Thyroid gland (tissue), 4 donors: ENCODE measurements at regions of chr6 and their contacts with region 1.

Region 1: DNA sequence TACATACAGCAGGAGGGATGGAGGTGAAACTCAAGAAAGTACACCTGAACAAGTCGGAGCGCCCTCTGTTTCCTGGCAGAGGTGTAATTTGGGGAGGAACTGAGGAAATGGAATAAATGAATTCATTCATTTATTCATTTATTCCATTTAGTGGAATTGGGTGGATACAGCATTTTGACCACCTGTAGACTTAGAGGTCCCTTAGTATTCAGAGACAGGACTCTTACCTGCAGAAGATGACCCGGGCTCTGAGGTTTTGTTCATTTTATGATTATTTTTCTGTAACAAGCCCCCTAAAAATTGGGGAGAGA is 9.1 kb downstream of the TRIM31 start:
- DNase-seq: no peak
- H3K4me3 ChIP-seq: no peak overlapping the region
- H3K27ac ChIP-seq: no peak overlapping the region
- H3K4me1 ChIP-seq: peaks cover 14 to 29% of the 10 kb centered on the region in 2 donors
- H3K27me3 ChIP-seq: no peaks in the 10 kb centered on the region
- CTCF ChIP-seq: no peak
- POLR2A ChIP-seq: no peak

Region 2: DNA sequence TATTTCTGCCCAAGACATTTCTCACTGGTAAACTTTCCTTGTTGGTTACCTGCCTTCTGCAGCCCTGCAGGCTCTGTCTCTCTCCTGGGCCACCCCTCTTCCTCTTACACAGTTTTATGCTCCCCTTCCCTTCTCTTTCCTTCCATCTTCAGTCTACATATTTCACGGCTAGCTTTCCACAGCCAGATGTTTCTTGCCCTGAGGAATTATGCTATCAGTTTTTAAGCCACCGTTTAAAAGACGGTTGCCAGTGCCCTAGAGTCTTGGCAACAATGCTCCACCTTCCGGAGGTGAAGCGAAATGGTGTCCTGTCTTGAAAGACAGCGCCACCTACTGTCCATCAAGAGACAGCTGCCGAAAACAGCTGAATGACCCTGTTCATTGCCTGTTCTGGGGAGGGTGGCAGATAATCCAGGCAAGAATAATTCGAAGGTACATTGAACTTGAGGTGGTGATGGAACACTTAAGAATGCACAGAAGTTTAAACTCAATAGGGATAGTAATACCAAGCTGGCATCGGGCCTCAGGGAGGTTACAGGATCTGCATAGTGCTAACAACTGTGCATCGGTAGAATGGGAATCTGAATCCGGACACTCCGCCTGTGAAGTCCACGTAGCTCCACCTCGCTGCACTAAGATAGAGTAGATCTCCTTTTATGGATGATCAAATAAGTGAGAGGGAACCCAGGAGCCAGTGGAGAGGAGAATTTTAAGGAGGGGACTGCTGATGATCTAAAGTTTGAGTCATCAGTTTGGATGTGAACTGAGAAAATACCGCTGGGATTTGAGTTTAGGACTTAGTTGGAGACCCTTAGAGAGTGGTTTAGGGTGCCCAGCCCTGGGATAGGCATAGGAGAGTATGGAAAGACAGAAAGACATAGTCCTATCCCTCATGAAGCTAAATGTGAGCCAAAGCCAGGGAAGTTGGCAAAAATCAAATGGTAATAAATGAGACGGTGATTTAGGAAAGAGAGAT is 27.3 kb after region 1 on chr6:
- intact Hi-C with region 1: loop called (anchors 2 kb)
- DNase-seq: peak; percentile 74 to 77
- H3K4me3 ChIP-seq: no peak overlapping the region
- H3K27ac ChIP-seq: no peak overlapping the region
- H3K4me1 ChIP-seq: peaks cover 13 to 21% of the 10 kb centered on the region in 2 donors
- H3K27me3 ChIP-seq: no peaks in the 10 kb centered on the region
- CTCF ChIP-seq: peak; percentile 77 to 99 (median 96)
- POLR2A ChIP-seq: no peak

Region 3: GRCh38 chr6:30616811-30617564 is 513.2 kb after region 1 on chr6 and contains the start of gene PPP1R10:
- intact Hi-C with region 1: no loop called
- DNase-seq: peak; percentile 99
- H3K4me3 ChIP-seq: peak within 1 kb of the TSS; percentile 74 to 88 (median 87)
- H3K27ac ChIP-seq: peak within 1 kb of the TSS; percentile 97 to 100 (median 98)
- H3K4me1 ChIP-seq: peaks cover 35 to 36% of the 10 kb centered on the region in 2 donors
- H3K27me3 ChIP-seq: no peaks in the 10 kb centered on the region
- CTCF ChIP-seq: no peak
- POLR2A ChIP-seq: peak; percentile 99 to 100
- total RNA-seq, gene PPP1R10: 49.1 to 72.2 (median 57.0) TPM